A673 (cell line): ENCODE measurements at regions of chr9 and their contacts with region 1.

Region 1: DNA sequence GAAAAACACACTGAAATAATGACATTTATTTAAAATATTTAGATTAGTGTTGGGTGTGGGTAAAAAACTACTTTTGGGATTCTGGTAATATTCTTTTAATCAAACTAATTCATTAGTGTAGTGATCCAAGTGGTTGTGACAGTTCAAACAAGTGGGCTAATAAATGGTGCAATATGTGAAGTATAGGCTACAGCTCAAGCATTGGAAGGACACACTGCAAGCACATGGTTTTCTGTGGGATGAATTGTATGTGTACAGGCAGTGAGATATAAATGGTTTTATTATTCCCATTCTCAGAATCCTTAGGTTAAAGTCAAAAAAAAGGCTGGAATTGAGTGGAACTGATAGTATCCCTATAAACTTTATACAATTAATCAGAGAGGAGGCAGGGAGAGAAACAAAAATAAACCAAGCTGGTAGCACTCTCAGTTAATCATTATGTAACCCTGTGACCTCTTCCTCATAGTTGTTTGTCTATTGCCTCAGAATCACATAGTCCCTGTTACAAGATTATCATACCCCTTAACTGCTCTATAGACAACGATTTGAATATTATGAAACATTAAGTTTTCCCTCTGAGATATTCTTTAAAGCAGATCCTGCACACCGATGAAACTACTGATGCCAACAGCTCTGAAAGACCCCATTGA is 1755.4 kb upstream of the ACO1 start:
- DNase-seq: no peak
- H3K4me3 ChIP-seq: no peak overlapping the region
- H3K27ac ChIP-seq: no peak overlapping the region
- H3K4me1 ChIP-seq: no peaks in the 10 kb centered on the region
- H3K27me3 ChIP-seq: no peaks in the 10 kb centered on the region
- CTCF ChIP-seq: no peak

Region 2: GRCh38 chr9:30574355-30575151 is 54.5 kb before region 1 on chr9:
- CTCF ChIA-PET with region 1: no interaction called
- POLR2A ChIA-PET with region 1: no interaction called
- intact Hi-C with region 1: loop called (anchors 10 kb)
- DNase-seq: no peak
- H3K4me3 ChIP-seq: no peak overlapping the region
- H3K27ac ChIP-seq: no peak overlapping the region
- H3K4me1 ChIP-seq: no peaks in the 10 kb centered on the region
- H3K27me3 ChIP-seq: no peaks in the 10 kb centered on the region
- CTCF ChIP-seq: no peak

Region 3: DNA sequence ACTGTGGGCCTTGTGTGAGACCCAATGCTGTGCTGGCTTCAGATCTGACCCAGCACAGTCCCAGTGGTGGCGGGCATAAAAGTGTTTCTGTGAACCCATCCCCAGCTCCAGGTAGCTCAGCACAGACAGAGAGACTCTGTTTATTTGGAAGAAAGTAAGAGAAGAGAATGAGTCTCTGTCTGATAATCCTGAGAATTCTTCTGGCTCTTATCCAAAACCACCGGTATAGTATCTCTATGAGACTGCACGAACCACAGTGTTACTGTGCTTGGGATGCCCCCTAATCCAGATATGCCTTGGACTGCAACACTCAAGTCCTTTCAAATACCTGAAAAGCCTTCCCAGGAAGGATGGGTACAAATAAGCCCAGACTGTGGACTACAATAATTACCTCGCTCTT is 94.6 kb after region 1 on chr9:
- CTCF ChIA-PET with region 1: no interaction called
- POLR2A ChIA-PET with region 1: no interaction called
- intact Hi-C with region 1: no loop called
- DNase-seq: no peak
- H3K4me3 ChIP-seq: no peak overlapping the region
- H3K27ac ChIP-seq: no peak overlapping the region
- H3K4me1 ChIP-seq: no peaks in the 10 kb centered on the region
- H3K27me3 ChIP-seq: no peaks in the 10 kb centered on the region
- CTCF ChIP-seq: no peak

Region 4: DNA sequence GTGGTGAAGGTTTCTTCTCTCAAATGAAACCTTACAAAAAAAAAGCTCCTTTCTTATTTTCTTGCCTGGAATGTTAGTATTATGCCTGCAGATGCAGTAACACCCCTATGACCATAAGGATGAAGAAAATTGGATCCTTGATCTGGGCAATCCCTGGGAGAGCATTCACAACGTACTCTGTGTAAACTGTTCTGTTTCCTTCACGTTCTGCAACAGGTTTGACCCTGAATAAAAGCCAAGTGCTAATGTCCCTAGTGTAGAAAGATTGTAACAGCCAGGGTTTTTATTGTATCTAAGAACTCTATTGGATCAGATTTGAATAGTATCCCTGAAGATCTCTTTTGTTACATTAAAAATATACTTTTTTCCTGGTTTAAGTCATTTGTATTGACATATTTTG is 115.8 kb after region 1 on chr9:
- CTCF ChIA-PET with region 1: no interaction called
- POLR2A ChIA-PET with region 1: no interaction called
- intact Hi-C with region 1: no loop called
- DNase-seq: no peak
- H3K4me3 ChIP-seq: no peak overlapping the region
- H3K27ac ChIP-seq: no peak overlapping the region
- H3K4me1 ChIP-seq: no peaks in the 10 kb centered on the region
- H3K27me3 ChIP-seq: no peaks in the 10 kb centered on the region
- CTCF ChIP-seq: no peak